ENCODE measurements at regions of chr2 and their contacts with region 1.

Region 1: DNA sequence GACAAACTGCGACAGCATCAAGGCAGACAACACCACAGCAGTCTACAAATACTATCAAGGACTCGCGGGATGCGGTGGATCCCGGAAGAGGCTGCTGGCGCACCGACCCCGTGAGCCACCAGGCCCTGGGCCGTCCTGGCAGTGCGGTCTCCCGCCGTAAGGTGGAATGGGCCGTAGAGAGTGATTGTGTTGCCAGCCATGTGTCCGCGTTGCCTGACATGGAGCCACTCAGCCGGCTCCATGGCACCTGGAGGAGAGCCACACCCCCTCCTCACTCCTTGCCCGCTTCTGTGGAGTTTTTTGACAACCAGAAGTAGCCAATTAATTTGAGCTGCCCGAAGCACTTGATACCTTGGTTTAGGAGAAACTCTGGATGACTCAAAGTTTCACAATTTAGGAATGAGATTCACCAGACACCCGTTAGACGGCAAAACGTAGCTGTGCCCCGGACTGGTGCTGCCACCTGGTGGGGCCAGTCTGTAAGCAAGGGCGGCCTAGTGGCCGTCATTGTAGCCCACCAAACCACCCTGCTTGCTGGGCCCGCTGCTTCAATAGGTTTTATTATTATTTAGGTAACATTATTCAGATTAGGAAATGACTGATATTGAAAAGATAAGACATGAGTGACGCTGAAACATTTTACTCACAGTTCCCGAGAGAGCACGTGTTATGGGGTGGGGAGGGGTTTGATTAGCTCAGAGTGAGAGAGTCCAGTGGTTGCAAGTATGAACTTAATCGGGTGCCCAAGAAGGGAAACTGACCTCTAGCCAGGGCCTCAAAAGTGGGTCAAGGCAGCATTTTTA is 10.2 kb upstream of the IMP4 start:
- DNase-seq: peak in 2 of 3 donors; percentile 81 to 84
- ATAC-seq: peak; percentile 76
- H3K4me3 ChIP-seq: no peak overlapping the region
- H3K4me1 ChIP-seq: no peaks in the 10 kb centered on the region
- CTCF ChIP-seq: peak; percentile 91

Region 2: DNA sequence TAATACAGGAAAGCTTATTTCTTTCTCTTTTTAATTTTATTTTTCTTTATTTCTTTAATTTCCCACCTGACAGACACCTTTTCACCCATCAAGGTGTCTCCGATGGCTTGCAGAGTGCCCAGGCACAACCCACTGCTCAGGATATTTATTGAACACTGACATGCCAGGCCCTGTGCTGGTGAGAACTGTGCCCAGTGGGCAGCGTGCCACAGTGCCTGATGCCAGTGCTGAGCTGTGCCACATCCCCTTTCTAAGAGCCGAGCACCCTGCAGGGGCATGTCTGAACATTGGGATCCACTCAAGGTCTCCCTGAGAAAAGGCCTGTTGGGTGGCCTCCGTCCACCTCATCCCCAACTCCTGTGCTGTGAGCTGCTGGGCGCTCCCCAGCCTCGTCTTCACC is 511.6 kb before region 1 on chr2:
- intact Hi-C with region 1: no loop called
- DNase-seq: no peak
- ATAC-seq: no peak
- H3K4me3 ChIP-seq: no peak overlapping the region
- H3K4me1 ChIP-seq: no peaks in the 10 kb centered on the region
- CTCF ChIP-seq: no peak

Region 3: GRCh38 chr2:130150181-130151144 is 182.0 kb before region 1 on chr2:
- intact Hi-C with region 1: no loop called
- DNase-seq: no peak
- ATAC-seq: no peak
- H3K4me3 ChIP-seq: no peak overlapping the region
- H3K4me1 ChIP-seq: no peaks in the 10 kb centered on the region
- CTCF ChIP-seq: no peak

Region 4: DNA sequence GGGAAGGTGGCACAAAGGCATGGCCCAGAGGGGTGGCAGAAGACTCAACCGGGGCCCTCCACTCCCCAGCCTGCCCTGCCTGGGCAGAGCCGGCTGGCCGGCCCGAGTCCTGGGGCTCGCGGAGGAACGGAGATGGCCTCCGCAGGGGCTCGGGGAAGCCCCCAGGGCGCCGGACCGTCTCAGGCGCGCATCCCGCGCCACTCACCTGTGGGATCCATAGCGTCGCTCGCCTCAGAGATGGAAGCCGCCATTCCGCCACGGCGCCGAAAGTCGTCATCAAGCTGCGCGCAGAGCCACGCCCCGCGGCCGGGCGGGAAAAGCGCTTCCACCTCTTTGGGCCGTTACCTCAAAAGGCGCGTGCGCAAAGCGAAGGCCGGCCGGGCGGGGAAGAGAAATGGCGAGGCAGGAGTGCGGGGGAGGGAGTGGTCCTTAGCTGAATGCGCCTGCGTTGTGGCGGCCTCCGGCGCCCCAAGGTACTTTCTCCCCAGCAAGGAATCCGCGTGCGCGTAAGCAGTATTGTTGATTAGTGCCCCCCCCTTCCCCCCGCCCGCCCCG is 151.1 kb before region 1 on chr2 and contains the start of gene SMPD4:
- intact Hi-C with region 1: loop called (anchors 10 kb)
- DNase-seq: peak; percentile 98 to 99 (median 98)
- ATAC-seq: peak; percentile 91
- H3K4me3 ChIP-seq: peak within 1 kb of the TSS; percentile 93
- H3K4me1 ChIP-seq: peaks cover 11% of the 10 kb centered on the region
- CTCF ChIP-seq: no peak
- total RNA-seq, gene SMPD4: 37.9 to 41.5 (median 38.2) TPM

Measured in mucosa of descending colon (tissue), 3 donors.